ENCODE measurements at regions of chr9 and their contacts with region 1.

Region 1: GRCh38 chr9:33800886-33801285 is 5.5 kb downstream of the PRSS3 start:
- DNase-seq: no peak
- ATAC-seq: no peak
- H3K4me3 ChIP-seq: no peak overlapping the region
- H3K27ac ChIP-seq: no peak overlapping the region
- H3K4me1 ChIP-seq: no peaks in the 10 kb centered on the region
- H3K27me3 ChIP-seq: no peaks in the 10 kb centered on the region
- CTCF ChIP-seq: no peak

Region 2: DNA sequence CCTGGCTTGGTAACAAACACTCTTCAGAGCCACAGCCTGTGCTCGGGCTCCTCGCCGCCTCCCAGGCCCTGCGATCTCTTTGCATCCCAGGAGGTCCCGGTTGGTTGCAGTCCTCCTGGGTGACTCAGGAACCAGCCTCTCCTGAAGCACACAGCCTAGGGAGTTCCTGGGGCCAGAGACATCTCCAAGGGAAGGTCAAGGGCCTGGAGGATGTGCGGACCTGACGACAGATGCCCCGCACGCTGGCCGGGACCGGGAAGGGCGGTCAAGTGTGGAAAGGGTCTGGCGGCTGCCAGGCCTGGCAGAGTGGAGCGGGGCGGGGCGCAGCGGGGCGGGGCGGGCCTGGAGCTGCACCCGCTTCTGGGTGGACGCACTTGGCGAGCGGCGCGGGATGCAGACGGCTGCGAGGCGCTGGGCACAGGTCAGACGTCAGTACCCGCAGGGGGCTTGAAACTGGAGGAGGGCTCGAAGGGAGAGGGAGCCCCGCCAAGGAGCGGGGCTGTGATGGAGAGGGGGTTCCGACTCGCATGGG is 50.5 kb before region 1 on chr9:
- intact Hi-C with region 1: loop called in 1 of 2 experiments (anchors 5 kb)
- DNase-seq: peak in 1 of 2 donors; percentile 12
- ATAC-seq: peak; percentile 17 to 72 (median 66)
- H3K4me3 ChIP-seq: peak overlapping the region; percentile 28
- H3K27ac ChIP-seq: no peak overlapping the region
- H3K4me1 ChIP-seq: peaks cover 10% of the 10 kb centered on the region
- H3K27me3 ChIP-seq: peaks cover 6 to 57% (median 10%) of the 10 kb centered on the region in 3 donors
- CTCF ChIP-seq: no peak